ENCODE measurements at regions of chr11 and their contacts with region 1.

Region 1: GRCh38 chr11:65083834-65084597 is at the starts of genes CDCA5 and ZFPL1:
- DNase-seq: peak; percentile 96 to 97
- ATAC-seq: peak; percentile 97 to 99 (median 99)
- H3K4me3 ChIP-seq: peak within 1 kb of the TSS; percentile 84
- H3K27ac ChIP-seq: peak within 1 kb of the TSS; percentile 88
- H3K4me1 ChIP-seq: peaks cover 23% of the 10 kb centered on the region
- H3K27me3 ChIP-seq: no peaks in the 10 kb centered on the region
- CTCF ChIP-seq: no peak
- total RNA-seq, gene CDCA5: 0.50 to 1.1 (median 0.87) TPM
- total RNA-seq, gene ZFPL1: 22.1 to 29.3 (median 26.2) TPM

Region 2: GRCh38 chr11:65040847-65041621 is 43.0 kb before region 1 on chr11 and contains the start of gene SAC3D1:
- intact Hi-C with region 1: loop called (anchors 5 kb)
- DNase-seq: peak; percentile 87 to 95
- ATAC-seq: peak; percentile 94 to 97 (median 94)
- H3K4me3 ChIP-seq: peak within 1 kb of the TSS; percentile 95
- H3K27ac ChIP-seq: peak within 1 kb of the TSS; percentile 93
- H3K4me1 ChIP-seq: peaks cover 26% of the 10 kb centered on the region
- H3K27me3 ChIP-seq: no peaks in the 10 kb centered on the region
- CTCF ChIP-seq: no peak
- total RNA-seq, gene SAC3D1: 8.4 to 12.3 (median 9.1) TPM

Region 3: GRCh38 chr11:65060913-65061408 is 23.1 kb before region 1 on chr11:
- intact Hi-C with region 1: no loop called
- DNase-seq: no peak
- ATAC-seq: no peak
- H3K4me3 ChIP-seq: no peak overlapping the region
- H3K27ac ChIP-seq: no peak overlapping the region
- H3K4me1 ChIP-seq: no peaks in the 10 kb centered on the region
- H3K27me3 ChIP-seq: no peaks in the 10 kb centered on the region
- CTCF ChIP-seq: no peak

Region 4: DNA sequence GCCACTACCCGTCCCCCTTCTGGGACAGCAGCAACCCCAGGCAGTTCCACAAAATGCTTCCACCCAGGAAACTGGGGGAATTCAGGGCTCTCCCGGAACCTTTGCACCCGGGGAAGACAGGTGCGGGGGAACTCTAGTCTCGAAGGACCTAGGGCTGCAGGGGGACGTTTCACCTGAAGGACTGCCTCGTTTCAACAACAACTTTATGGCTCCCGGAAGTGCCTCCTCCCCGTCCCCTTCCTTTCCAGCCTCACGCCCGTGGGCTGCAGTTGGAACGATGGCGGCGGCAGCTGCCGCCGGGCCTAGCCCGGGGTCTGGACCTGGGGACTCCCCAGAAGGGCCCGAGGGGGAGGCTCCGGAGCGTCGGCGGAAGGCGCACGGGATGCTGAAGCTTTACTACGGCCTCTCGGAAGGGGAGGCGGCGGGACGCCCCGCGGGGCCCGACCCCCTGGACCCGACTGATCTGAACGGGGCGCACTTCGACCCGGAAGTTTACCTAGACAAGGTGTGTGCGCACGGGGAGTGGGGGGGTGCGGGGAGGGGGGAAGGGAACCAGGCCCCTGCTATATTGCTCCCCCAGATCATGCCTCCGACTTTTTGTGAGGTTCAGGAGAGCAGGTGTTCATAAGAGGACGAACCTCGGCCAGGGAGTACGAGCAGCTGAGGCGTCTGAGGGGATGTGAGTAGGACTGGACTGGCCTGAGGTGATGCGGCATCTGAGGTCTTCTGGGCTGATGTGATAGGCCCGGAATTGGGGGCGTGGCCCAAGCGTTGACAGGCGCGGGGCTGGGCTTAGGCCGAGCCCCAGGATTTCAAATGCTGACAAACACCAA is 12.2 kb after region 1 on chr11 and contains the start of gene VPS51:
- intact Hi-C with region 1: loop called in 1 of 2 experiments (anchors 1 kb)
- DNase-seq: peak; percentile 88 to 92
- ATAC-seq: peak; percentile 91 to 94 (median 93)
- H3K4me3 ChIP-seq: peak within 1 kb of the TSS; percentile 93
- H3K27ac ChIP-seq: peak within 1 kb of the TSS; percentile 96
- H3K4me1 ChIP-seq: peaks cover 25% of the 10 kb centered on the region
- H3K27me3 ChIP-seq: no peaks in the 10 kb centered on the region
- CTCF ChIP-seq: no peak
- total RNA-seq, gene VPS51: 82.2 to 105 (median 91.3) TPM

Region 5: GRCh38 chr11:65117216-65118096 is 33.4 kb after region 1 on chr11 and contains the start of gene ZNHIT2:
- intact Hi-C with region 1: loop called in 1 of 2 experiments (anchors 2 kb)
- DNase-seq: peak; percentile 99 to 100
- ATAC-seq: peak; percentile 86 to 88 (median 87)
- H3K4me3 ChIP-seq: peak within 1 kb of the TSS; percentile 79
- H3K27ac ChIP-seq: peak within 1 kb of the TSS; percentile 81
- H3K4me1 ChIP-seq: peaks cover 28% of the 10 kb centered on the region
- H3K27me3 ChIP-seq: no peaks in the 10 kb centered on the region
- CTCF ChIP-seq: peak; percentile 93
- total RNA-seq, gene ZNHIT2: 8.6 to 16.1 (median 10.2) TPM

Region 6: DNA sequence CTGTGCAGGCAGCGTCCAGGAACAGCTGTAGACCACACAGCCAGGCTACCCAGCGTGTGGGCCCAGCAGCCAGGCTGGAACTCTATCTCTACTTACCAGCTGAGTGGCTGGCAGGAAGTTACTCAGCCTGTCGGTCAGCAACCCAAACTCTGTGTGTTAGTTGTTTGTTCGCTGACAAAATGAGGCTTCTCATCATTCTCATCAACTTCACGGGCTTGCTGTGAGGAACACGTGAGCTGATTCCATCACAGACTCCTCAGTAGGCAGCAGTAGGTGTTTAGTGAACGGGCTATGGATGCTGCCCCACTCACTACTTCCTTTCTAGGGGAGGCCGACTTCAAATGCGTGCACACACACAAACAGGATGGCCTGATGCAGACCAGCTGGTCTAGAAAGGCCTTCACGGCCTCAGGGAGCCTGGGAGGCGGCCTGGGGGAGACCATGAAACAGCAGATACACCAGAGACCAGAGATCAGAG is 85.2 kb after region 1 on chr11:
- intact Hi-C with region 1: no loop called
- DNase-seq: no peak
- ATAC-seq: no peak
- H3K4me3 ChIP-seq: no peak overlapping the region
- H3K27ac ChIP-seq: no peak overlapping the region
- H3K4me1 ChIP-seq: no peaks in the 10 kb centered on the region
- H3K27me3 ChIP-seq: peaks cover 0 to 1% (median 0%) of the 10 kb centered on the region in 3 donors
- CTCF ChIP-seq: no peak

Region 7: GRCh38 chr11:65459552-65459951 is 375.5 kb after region 1 on chr11:
- intact Hi-C with region 1: no loop called
- DNase-seq: no peak
- ATAC-seq: no peak
- H3K4me3 ChIP-seq: no peak overlapping the region
- H3K27ac ChIP-seq: no peak overlapping the region
- H3K4me1 ChIP-seq: peaks cover 15% of the 10 kb centered on the region
- H3K27me3 ChIP-seq: no peaks in the 10 kb centered on the region
- CTCF ChIP-seq: no peak

Region 8: DNA sequence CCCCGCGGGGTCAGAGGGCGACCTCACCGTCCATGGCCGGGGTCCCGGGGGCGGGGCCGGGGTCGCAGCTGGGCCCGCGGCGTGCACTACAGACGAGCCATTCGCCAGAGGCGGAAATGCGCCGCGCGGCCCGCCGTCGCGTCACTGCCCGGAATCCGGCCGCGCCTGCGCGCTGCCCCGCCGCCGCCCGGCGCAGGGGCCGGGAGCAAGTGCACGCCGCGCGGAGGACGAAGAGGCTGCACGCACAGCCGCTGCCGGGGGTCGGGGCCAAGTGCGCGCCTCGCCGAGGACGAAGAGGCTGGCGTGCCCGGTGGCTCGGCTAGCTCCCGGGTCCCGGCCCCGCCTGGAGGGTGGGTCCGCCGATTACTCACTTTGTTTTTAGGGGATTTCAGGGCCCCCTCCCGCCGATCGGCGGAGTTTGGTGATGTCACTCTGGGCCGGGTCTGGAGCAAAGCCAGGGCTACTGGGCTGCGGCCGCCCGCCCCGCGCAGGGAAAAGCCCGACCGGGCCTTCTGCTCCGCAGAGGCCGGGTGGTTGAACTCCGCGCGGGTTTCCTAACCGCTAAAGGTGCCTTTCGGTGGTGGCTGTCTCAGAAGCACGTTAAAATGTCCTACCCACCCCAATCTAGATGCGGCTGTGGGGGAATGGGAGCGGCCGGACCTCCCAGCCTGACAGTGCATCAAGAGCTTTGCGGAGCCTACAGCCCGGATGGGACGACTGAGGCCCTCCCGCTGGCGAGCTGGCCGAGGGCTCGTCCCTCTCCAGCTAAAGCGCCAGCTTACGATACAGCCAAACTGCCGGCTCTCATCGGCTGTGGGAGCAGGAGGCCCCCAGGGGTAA is 579.0 kb after region 1 on chr11 and contains the start of gene RELA:
- intact Hi-C with region 1: no loop called
- DNase-seq: peak; percentile 95 to 97
- ATAC-seq: peak; percentile 90 to 93 (median 92)
- H3K4me3 ChIP-seq: peak within 1 kb of the TSS; percentile 88
- H3K27ac ChIP-seq: peak within 1 kb of the TSS; percentile 94
- H3K4me1 ChIP-seq: peaks cover 17% of the 10 kb centered on the region
- H3K27me3 ChIP-seq: no peaks in the 10 kb centered on the region
- CTCF ChIP-seq: no peak
- total RNA-seq, gene RELA: 48.7 to 72.6 (median 65.2) TPM